Calu3 (cell line): ENCODE measurements at regions of chr12 and their contacts with region 1.

Region 1: GRCh38 chr12:58067599-58068387 is 126.4 kb downstream of the ATP23 start:
- DNase-seq: peak; percentile 57
- H3K4me3 Mint-ChIP-seq: no peak overlapping the region
- H3K27ac Mint-ChIP-seq: peak overlapping the region; percentile 91
- H3K4me1 Mint-ChIP-seq: peaks cover 52% of the 10 kb centered on the region
- H3K27me3 Mint-ChIP-seq: no peaks in the 10 kb centered on the region
- CTCF ChIP-seq: no peak

Region 2: DNA sequence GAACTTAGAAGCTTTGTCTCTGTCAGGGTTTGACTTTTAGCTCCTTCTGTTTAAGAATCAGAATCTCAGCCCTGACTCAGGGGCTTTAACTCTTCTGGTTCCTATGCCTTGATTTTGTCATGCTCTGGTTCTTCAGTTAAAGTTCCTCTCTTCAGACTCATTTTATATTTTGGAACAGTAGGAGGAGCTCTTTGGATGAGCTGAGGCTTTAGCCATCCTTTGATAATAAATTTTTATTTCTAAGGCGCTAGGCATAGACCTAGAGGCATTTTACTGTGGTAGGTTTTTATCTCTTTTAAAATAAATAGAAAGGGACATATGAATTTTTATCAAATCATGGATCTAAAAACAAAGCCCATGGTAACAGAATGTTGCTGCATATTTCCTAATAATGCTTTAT is 74.8 kb before region 1 on chr12:
- CTCF ChIA-PET with region 1: no interaction called
- intact Hi-C with region 1: loop called (anchors 5 kb)
- DNase-seq: no peak
- H3K4me3 Mint-ChIP-seq: no peak overlapping the region
- H3K27ac Mint-ChIP-seq: no peak overlapping the region
- H3K4me1 Mint-ChIP-seq: peaks cover 15% of the 10 kb centered on the region
- H3K27me3 Mint-ChIP-seq: no peaks in the 10 kb centered on the region
- CTCF ChIP-seq: no peak

Region 3: DNA sequence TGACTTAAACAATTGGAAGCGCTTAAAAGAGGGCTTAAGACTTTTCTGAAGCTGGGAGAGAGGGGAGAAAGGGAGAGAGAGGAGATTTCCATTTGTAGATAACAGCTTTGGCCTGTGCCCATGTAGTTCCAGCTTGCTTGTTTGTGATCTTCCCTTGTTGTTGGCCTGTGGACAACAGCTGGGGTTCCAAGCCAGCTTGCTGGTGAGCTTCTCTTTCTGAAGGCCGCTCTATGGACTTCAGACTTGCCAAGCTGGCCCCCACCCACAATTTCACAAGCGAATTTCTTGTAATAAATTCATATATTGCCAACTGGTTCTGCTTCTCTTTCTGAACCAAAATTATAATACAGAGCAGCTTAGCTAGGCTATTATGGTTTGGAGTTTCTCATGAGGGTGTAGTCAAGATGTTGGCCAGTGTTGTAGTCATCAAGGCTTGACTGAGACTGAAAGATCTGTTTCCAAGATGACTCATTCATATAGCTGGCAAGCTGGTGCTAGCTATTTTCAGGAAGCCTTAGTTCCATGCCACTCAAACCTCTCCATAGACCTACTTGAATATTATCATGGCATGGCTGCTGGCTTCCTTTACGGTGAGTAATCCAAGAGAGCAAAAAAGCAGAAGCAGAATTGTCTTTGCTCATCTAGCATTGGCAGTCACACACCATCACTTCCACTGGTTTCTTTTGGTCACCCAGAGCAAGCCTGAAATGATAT is 37.1 kb before region 1 on chr12:
- CTCF ChIA-PET with region 1: interaction called, 5 read pairs
- intact Hi-C with region 1: loop called (anchors 5 kb)
- DNase-seq: no peak
- H3K4me3 Mint-ChIP-seq: no peak overlapping the region
- H3K27ac Mint-ChIP-seq: no peak overlapping the region
- H3K4me1 Mint-ChIP-seq: peaks cover 36% of the 10 kb centered on the region
- H3K27me3 Mint-ChIP-seq: no peaks in the 10 kb centered on the region
- CTCF ChIP-seq: no peak

Region 4: DNA sequence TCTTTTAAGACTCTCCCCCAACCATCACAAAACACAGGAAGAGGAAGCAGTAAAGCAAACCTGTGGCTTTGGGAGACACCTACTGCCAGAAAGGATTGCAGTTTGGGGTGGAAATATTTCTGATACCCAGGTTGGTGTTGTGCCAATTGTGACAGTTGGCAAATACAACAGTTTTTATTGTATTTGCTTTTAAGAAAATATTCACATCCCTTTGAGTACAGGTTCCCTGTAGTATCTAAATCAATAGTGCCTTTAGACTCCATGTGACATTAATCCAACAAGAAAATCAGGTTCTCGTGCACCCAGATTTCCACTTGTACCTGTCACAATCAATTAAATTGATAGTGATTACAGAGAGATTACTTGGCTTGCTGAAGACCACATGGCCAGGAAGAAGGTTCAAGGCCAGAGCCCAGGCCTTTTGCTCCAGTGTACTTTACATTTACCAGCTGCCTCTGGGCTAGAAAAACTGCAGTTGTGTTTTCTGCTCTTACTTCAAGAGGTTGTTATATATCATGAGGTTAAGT is 234.8 kb after region 1 on chr12:
- CTCF ChIA-PET with region 1: no interaction called
- intact Hi-C with region 1: loop called (anchors 5 kb)
- DNase-seq: peak; percentile 66
- H3K4me3 Mint-ChIP-seq: no peak overlapping the region
- H3K27ac Mint-ChIP-seq: peak overlapping the region; percentile 64
- H3K4me1 Mint-ChIP-seq: peaks cover 27% of the 10 kb centered on the region
- H3K27me3 Mint-ChIP-seq: no peaks in the 10 kb centered on the region
- CTCF ChIP-seq: no peak

Region 5: DNA sequence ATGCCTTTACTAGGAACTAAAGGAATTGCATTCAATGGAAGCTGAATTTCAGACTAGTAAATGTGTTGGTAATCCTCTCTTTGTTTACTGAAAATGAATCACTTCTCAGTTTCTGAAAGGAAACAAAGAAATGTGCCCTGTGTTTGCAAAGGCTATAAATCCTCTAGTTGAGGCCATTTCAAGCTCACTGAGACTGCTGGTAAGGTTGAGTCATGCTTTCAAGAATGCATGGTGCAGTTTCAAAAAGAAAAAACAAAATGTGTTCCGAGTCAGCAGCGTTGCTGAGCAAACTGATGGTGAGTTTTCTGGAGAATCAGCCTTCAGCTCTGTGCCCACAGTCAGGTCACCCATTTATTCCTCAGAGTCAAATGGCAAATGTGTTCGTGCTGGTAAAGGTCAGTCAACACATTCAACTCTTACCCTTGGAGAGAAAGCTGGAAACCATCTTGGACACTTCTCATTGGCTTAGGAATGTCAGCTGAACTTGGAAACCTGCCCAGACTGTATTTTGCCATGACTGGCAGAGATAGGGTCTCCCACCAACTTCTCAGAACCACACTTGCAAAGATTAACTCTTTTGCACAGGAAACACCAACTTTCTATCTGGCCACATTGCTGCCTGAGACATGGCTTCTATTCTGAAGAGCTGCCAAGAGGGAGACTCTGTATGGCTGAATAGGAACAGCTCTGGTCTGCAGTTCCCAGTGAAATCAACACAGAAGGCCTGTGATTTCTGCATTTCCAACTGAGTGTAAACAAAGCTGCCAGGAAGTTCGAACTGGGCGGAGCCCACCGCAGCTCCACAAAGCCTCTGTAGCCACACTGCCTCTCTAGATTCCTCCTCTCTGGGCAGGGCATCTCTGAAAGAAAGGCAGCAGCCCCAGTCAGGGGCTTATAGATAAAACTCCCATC is 357.9 kb after region 1 on chr12:
- CTCF ChIA-PET with region 1: no interaction called
- intact Hi-C with region 1: loop called (anchors 10 kb)
- DNase-seq: peak; percentile 62
- H3K4me3 Mint-ChIP-seq: peak overlapping the region; percentile 53
- H3K27ac Mint-ChIP-seq: peak overlapping the region; percentile 70
- H3K4me1 Mint-ChIP-seq: peaks cover 42% of the 10 kb centered on the region
- H3K27me3 Mint-ChIP-seq: no peaks in the 10 kb centered on the region
- CTCF ChIP-seq: no peak

Region 6: DNA sequence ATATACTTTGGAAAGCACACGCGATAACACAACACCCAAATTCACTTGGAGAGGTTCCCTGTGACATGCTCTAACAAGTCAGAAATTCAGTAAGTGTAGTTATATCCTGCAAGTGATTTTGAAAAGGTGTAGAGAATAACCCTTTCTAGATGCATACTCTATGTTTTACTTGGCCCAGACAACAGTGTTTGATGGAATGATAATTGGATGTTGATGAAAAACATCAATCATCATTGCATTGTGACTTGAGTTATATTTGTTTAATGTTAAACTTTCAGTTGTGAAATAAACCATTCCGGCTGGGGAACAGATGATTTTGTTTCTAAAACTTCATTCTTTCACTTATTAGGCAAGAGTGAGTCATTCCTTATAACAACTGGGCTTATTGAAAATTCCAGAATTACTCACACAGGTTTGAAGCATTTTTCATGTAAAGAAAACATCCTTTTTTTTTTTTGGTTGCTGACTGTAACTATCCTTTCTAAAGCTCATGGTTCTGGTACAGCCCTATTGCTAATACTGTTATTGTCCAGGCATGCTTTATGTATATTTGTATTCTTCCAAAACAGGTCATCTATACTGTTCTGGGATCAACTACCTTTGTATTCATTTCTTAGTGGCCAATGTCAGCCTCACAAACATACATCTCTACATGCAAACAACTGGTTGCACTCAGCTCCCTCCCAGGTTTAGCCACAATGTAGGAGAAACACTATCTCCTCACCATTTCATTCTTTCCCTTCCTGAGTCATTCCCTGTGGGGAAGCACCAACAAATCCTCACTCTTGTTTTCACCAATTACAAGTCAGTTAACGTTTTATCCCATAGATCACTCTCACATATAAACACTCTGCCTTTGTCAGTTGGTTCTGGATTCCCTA is 973.7 kb after region 1 on chr12:
- CTCF ChIA-PET with region 1: no interaction called
- intact Hi-C with region 1: loop called (anchors 10 kb)
- DNase-seq: peak; percentile 51
- H3K4me3 Mint-ChIP-seq: peak overlapping the region; percentile 28
- H3K27ac Mint-ChIP-seq: peak overlapping the region; percentile 94
- H3K4me1 Mint-ChIP-seq: peaks cover 65% of the 10 kb centered on the region
- H3K27me3 Mint-ChIP-seq: no peaks in the 10 kb centered on the region
- CTCF ChIP-seq: no peak

Region 7: GRCh38 chr12:59067083-59067482 is 999.3 kb after region 1 on chr12:
- CTCF ChIA-PET with region 1: no interaction called
- intact Hi-C with region 1: loop called (anchors 5 kb)
- DNase-seq: peak; percentile 74
- H3K4me3 Mint-ChIP-seq: peak overlapping the region; percentile 33
- H3K27ac Mint-ChIP-seq: peak overlapping the region; percentile 91
- H3K4me1 Mint-ChIP-seq: peaks cover 59% of the 10 kb centered on the region
- H3K27me3 Mint-ChIP-seq: no peaks in the 10 kb centered on the region
- CTCF ChIP-seq: no peak